Dorsolateral prefrontal cortex (tissue), 120 donors: ENCODE measurements at regions of chr9 and their contacts with region 1.

Region 1: GRCh38 chr9:115211413-115212124 is 93.6 kb upstream of the TNC start:
- DNase-seq: no peak
- H3K4me3 ChIP-seq: no peak overlapping the region
- H3K27ac ChIP-seq: no peak overlapping the region
- H3K27me3 ChIP-seq: no peaks in the 10 kb centered on the region
- CTCF ChIP-seq: no peak

Region 2: DNA sequence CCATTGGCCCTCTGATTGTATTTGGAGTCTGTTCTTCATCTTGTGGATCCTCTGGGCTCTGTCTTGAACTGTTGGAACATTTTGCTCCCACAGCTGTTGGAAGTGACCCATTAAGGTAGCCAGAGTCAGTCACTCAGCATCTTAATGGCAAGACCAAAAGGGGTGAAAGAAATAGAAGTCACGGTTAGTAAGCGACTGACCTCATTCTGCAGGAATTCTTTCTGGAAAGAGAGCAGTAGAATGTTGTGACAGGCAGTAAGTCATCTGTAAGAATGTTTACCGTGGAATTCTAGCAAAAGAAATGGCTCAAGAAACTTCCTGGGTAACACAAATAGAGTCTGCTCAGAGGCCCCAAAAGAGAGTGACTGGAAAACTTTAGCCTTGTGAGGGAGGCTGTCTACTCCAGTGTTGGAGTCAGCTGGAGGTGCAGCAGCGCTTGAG is 65.0 kb before region 1 on chr9:
- intact Hi-C with region 1: no loop called
- DNase-seq: no peak
- H3K4me3 ChIP-seq: no peak overlapping the region
- H3K27ac ChIP-seq: no peak overlapping the region
- H3K27me3 ChIP-seq: no peaks in the 10 kb centered on the region
- CTCF ChIP-seq: no peak

Region 3: DNA sequence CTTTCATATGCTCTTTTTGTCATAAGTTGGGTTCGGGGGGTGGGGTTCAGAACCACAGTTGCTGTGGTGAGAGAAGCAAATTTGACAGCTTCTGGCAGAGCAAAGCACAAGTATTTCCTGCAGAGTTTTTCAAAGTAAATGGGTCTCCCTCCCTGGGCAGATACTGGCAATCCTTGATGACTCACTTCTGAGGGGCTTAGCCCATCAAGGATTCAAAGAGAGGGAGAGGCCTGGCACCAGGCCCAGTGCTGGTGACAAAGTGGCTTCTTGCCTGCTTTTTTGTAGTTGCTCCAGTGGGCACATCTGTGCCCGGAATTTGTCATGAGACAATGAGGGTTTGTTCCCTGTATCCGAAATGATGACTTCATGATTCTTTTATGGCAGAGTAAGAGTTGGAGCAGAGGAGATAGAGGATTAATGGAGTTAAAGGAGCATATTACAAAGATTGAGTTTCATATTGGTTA is 47.0 kb before region 1 on chr9:
- intact Hi-C with region 1: loop called in 1 of 2 experiments (anchors 10 kb)
- DNase-seq: peak in 9 of 10 donors; percentile 63 to 87 (median 76)
- H3K4me3 ChIP-seq: peak overlapping the region in 4 of 59 donors; percentile 3 to 32 (median 12)
- H3K27ac ChIP-seq: peak overlapping the region in 28 of 59 donors; percentile 2 to 80 (median 42)
- H3K27me3 ChIP-seq: no peaks in the 10 kb centered on the region
- CTCF ChIP-seq: peak in 1 of 56 donors; percentile 14